OCI-LY7 (cell line): ENCODE measurements at regions of chr3 and their contacts with region 1.

Region 1: DNA sequence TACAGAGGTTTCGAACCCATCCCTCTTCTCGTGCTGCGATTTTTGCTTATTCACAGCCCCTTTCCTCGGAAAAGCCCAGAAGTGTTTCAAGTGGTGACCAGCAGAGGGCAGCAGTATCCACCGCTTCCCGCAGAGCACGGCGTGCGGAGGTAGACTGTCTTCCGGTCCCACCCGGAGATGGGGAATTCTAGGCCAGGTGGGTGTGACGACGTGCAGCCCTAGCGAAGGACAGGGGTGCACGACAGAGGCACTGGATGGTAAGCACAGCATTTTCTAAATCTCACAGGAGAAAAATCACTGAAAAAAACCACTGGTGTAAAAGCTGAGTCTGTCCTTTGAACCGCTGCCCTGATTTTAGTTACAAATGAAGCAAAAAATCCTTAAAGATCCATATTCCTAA is 7.4 kb upstream of the PSMD6 start:
- DNase-seq: peak; percentile 84
- H3K4me3 ChIP-seq: peak overlapping the region; percentile 53
- H3K27ac ChIP-seq: no peak overlapping the region
- H3K4me1 ChIP-seq: peaks cover 6% of the 10 kb centered on the region
- CTCF ChIP-seq: peak; percentile 88

Region 2: GRCh38 chr3:64224826-64225610 is 194.3 kb after region 1 on chr3 and contains the start of gene PRICKLE2:
- CTCF ChIA-PET with region 1: no interaction called
- POLR2A ChIA-PET with region 1: interaction called, 3 read pairs
- intact Hi-C with region 1: loop called (anchors 1 kb)
- DNase-seq: peak; percentile 92
- H3K4me3 ChIP-seq: peak within 1 kb of the TSS; percentile 75
- H3K27ac ChIP-seq: peak within 1 kb of the TSS; percentile 40
- H3K4me1 ChIP-seq: peaks cover 34% of the 10 kb centered on the region
- CTCF ChIP-seq: peak; percentile 67
- total RNA-seq, gene PRICKLE2: 1.3 and 2.0 TPM in 2 replicates

Region 3: DNA sequence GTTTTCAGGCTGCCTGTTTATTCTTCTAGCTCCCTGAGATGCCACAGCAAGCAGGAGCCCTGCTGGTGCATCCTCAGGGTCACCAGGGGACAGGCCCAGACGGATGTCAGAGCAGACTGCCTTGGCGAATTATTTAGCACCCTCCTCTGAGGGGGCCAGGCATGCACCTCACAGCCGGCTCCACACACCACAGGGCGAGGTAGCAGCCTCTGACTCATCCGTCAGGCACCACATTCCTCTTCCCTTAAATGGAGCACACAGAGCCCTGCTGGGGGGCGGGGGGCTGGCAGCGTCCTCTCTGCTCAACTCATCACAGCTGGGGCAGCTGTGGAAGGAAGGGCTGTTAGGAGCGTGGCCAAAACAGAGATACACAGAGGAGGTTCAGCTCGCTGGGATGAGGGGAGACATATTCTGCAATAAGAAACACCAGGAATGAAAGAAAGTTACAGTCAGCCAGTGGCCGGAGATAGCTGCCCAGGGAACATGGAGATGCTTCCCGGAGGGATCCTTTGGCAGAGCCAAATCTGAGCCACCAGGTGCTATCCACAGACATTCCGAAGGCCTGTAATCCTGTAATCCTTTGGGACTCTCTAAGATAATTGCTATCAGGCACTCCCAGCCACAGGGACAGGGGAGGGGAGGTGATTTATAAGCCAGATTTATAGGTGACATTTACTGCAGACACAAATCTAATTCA is 208.4 kb after region 1 on chr3:
- CTCF ChIA-PET with region 1: no interaction called
- POLR2A ChIA-PET with region 1: no interaction called
- intact Hi-C with region 1: no loop called
- DNase-seq: no peak
- H3K4me3 ChIP-seq: no peak overlapping the region
- H3K27ac ChIP-seq: no peak overlapping the region
- H3K4me1 ChIP-seq: peaks cover 15% of the 10 kb centered on the region
- CTCF ChIP-seq: no peak

Region 4: GRCh38 chr3:64399205-64399800 is 368.6 kb after region 1 on chr3:
- CTCF ChIA-PET with region 1: no interaction called
- POLR2A ChIA-PET with region 1: no interaction called
- intact Hi-C with region 1: loop called (anchors 1 kb)
- DNase-seq: peak; percentile 49
- H3K4me3 ChIP-seq: no peak overlapping the region
- H3K27ac ChIP-seq: no peak overlapping the region
- H3K4me1 ChIP-seq: no peaks in the 10 kb centered on the region
- CTCF ChIP-seq: peak; percentile 80

Region 5: GRCh38 chr3:64484289-64484992 is 453.7 kb after region 1 on chr3:
- CTCF ChIA-PET with region 1: no interaction called
- POLR2A ChIA-PET with region 1: interaction called, 3 read pairs
- intact Hi-C with region 1: loop called (anchors 1 kb)
- DNase-seq: peak; percentile 72
- H3K4me3 ChIP-seq: no peak overlapping the region
- H3K27ac ChIP-seq: no peak overlapping the region
- H3K4me1 ChIP-seq: no peaks in the 10 kb centered on the region
- CTCF ChIP-seq: peak; percentile 88